Head of caudate nucleus (tissue), 42 donors: ENCODE measurements at regions of chr17 and their contacts with region 1.

Region 1: DNA sequence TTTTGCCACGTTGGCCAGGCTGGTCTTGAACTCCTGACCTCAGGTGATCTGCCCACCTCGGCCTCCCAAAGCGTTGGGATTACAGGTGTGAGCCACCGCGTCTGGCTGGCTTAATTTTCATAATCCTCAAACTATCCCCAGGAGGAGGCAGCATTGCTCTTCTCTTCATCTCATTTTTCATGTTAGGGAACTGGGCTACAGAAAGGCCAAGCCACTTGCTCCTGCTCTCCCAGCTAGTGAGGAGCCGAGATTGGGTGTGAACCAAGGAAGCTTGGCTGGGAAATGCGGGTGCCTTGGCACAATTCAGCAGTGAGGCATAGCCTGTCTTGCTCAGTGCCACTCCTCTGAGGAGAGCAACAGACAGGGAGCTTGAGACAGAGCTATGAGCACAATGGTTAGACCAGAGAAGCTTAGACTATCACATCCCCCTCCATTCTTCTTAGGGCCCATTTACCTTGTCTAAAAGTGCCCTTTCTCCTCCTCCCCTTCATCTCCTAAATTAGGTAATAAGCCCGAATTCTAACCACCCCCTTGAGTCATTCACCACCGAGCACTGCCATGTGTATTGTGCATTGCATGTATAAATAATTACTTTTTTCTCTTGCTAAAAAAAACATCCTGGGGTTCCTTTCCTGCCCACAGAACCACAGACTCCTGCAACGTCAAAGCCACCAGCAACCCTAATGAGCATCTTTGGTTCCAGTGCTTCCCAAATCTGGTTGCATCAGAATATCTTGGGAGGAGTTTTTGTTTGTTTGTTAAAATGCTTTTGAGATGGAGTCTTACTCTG is 20.0 kb upstream of the KIF19 start:
- DNase-seq: peak in 24 of 42 donors; percentile 10 to 80 (median 47)

Region 2: DNA sequence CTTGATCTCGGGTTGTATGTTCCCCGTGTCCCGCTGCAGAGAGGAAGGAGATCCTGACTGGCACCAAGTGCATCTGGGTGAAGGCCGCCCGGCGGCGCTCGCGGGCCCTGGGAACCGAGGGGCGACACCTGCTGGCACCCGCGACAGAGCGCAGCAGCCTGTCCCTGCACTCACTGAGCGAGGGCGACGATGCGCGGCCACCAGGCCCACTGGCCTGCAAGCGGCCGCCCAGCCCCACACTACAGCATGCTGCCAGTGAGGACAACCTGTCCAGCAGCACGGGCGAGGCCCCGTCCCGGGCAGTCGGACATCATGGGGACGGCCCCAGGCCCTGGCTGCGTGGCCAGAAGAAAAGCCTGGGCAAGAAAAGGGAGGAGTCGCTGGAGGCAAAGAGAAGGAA is 48.1 kb after region 1 on chr17:
- intact Hi-C with region 1: loop called (anchors 5 kb)
- DNase-seq: peak in 28 of 42 donors; percentile 34 to 85 (median 54)

Region 3: GRCh38 chr17:74361230-74362068 is 55.4 kb after region 1 on chr17 and contains the start of gene BTBD17:
- intact Hi-C with region 1: loop called (anchors 2 kb)
- DNase-seq: peak; percentile 38 to 91 (median 78)

Region 4: GRCh38 chr17:74457146-74457819 is 151.2 kb after region 1 on chr17:
- intact Hi-C with region 1: loop called (anchors 5 kb)
- DNase-seq: peak; percentile 42 to 95 (median 88)

Region 5: GRCh38 chr17:74502861-74503260 is 196.8 kb after region 1 on chr17:
- intact Hi-C with region 1: no loop called
- DNase-seq: no peak